ENCODE measurements at regions of chr1 and their contacts with region 1.

Region 1: DNA sequence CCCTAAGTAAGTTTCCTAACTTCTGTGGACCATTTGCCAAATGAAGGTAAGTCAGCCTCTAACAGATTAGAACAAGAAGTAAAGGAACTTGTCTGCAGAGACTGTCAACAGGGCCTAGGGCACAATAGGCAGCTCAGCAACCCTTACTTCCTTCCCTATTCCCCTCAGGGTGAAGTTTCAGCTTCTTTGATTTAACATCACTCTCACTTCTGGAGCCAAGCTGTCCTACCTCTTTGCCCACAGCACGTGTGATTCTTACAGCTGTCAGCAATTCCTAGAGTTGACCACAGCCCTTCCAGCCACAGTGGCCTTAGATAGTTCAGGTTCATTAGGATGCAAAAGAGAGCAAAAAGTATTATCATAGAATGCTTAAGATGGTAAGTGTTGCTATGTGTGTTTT is 7.6 kb upstream of the EIF4G3 start:
- DNase-seq: no peak

Region 2: DNA sequence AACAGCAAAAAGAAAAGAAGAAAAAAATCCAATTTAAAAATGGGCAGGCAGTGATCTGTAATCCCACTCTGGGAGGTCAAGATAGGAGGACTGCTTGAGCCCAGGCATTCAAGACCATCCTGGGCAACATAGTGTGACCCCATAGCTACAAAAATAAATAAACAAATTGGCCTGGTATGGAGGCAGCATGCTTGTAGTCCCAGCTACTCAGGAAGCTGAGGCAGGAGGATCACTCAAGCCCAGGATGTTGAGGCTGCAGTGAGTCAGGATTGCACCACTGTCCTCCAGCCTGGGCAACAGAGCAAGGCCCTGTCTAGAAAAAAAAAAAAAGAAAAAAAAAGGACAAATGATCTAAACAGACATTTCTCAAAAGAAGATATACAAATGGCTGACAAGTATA is 107.2 kb before region 1 on chr1:
- intact Hi-C with region 1: loop called (anchors 5 kb)
- DNase-seq: no peak

Measured in posterior cingulate gyrus (tissue), 11 donors.